ENCODE measurements at regions of chr17 and their contacts with region 1.

Region 1: DNA sequence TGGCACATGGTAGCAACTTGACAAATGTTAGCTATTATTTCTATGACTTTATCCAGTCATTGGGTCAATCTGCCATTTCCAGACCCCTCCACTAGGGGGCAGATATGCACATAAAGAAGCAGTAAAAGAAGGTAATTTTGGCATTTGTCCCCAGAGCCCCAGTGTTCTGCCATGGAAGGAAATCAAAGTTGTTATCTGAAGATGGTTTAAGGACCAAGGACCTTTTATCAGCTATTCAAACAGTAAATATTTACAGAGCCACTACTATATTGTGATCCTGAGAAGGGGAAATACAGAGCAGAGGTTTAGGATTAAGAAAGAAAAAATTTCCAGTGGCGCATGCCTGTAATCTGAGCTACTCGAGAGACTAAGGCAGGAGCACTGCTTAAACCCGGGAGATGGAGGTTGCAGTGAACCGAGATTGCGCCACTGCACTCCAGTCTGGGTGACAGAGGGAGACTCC is 20.0 kb downstream of the TRAF4 start:
- DNase-seq: peak; percentile 80 to 87
- H3K4me3 ChIP-seq: no peak overlapping the region
- H3K4me3 Mint-ChIP-seq: no peak overlapping the region
- H3K27ac Mint-ChIP-seq: peak overlapping the region; percentile 13
- H3K4me1 ChIP-seq: no peaks in the 10 kb centered on the region
- H3K4me1 Mint-ChIP-seq: no peaks in the 10 kb centered on the region
- H3K27me3 ChIP-seq: no peaks in the 10 kb centered on the region
- H3K27me3 Mint-ChIP-seq: no peaks in the 10 kb centered on the region
- CTCF ChIP-seq: peak; percentile 85 to 88

Region 2: GRCh38 chr17:28655160-28655840 is 108.5 kb before region 1 on chr17:
- CTCF ChIA-PET with region 1: no interaction called
- POLR2A ChIA-PET with region 1: no interaction called
- intact Hi-C with region 1: no loop called
- DNase-seq: peak in 1 of 2 experiments; percentile 24
- H3K4me3 ChIP-seq: no peak overlapping the region
- H3K4me3 Mint-ChIP-seq: no peak overlapping the region
- H3K27ac Mint-ChIP-seq: no peak overlapping the region
- H3K4me1 ChIP-seq: no peaks in the 10 kb centered on the region; the same call in 1 of the 2 replicates
- H3K4me1 Mint-ChIP-seq: no peaks in the 10 kb centered on the region
- H3K27me3 ChIP-seq: no peaks in the 10 kb centered on the region
- H3K27me3 Mint-ChIP-seq: no peaks in the 10 kb centered on the region
- CTCF ChIP-seq: no peak

Region 3: GRCh38 chr17:28698253-28698941 is 65.4 kb before region 1 on chr17:
- CTCF ChIA-PET with region 1: no interaction called
- POLR2A ChIA-PET with region 1: no interaction called
- intact Hi-C with region 1: no loop called
- DNase-seq: peak; percentile 94 to 95
- H3K4me3 ChIP-seq: no peak overlapping the region
- H3K4me3 Mint-ChIP-seq: peak overlapping the region; percentile 52
- H3K27ac Mint-ChIP-seq: peak overlapping the region; percentile 87
- H3K4me1 ChIP-seq: peaks cover 31% of the 10 kb centered on the region
- H3K4me1 Mint-ChIP-seq: peaks cover 26% of the 10 kb centered on the region
- H3K27me3 ChIP-seq: no peaks in the 10 kb centered on the region
- H3K27me3 Mint-ChIP-seq: no peaks in the 10 kb centered on the region
- CTCF ChIP-seq: peak in 1 of 2 experiments; percentile 14

Region 4: DNA sequence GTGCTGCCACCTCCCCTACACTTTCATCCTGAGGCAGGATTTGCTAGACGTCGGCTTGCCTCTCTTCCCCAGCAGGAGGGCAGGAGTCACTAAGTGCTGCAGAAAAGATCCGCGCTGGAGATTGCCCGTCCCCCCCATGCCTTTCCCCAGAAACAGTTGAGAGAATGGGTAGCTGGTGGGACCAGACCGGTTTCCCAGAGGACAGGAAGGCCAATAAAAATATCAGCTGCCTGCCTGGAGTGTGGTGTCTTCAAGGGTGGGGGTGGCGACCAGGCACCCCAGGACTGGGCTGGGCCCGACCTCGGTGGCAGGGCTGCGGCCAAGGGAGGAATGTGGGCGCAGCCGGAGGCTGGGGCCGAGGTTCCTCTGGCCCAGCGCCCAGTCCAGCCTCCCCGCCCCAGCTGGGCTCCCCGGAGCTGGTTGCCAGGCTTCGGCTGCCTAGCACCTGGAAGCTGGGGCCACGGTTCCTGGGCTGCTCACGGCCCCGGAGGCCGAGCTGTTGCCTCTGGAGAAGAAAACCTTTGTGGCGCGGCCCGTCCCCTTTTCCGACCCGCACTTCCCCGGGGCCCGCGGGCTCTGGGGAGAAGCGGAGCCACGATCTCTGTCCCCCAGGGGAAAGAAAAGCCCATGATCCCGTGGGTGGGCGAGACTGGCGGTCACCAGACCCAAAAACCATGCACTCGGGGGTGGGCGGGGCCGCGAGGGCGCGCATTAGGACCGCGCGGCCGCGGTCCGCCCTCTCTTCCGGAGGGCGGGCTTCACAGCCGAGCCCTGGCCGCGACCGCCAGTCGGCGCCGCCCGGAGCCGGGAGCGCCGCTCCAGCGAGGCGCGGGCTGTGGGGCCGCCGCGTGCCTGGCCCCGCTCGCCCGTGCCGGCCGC is 20.4 kb before region 1 on chr17 and contains the start of gene TRAF4:
- CTCF ChIA-PET with region 1: interaction called, 42 read pairs
- POLR2A ChIA-PET with region 1: no interaction called
- intact Hi-C with region 1: no loop called
- DNase-seq: peak; percentile 83 to 91
- H3K4me3 ChIP-seq: peak within 1 kb of the TSS; percentile 68
- H3K4me3 Mint-ChIP-seq: peak within 1 kb of the TSS; percentile 95
- H3K27ac Mint-ChIP-seq: peak within 1 kb of the TSS; percentile 96
- H3K4me1 ChIP-seq: peaks cover 40% of the 10 kb centered on the region
- H3K4me1 Mint-ChIP-seq: peaks cover 12% of the 10 kb centered on the region
- H3K27me3 ChIP-seq: no peaks in the 10 kb centered on the region
- H3K27me3 Mint-ChIP-seq: no peaks in the 10 kb centered on the region
- CTCF ChIP-seq: peak in 1 of 2 experiments; percentile 18
- total RNA-seq, gene TRAF4: 140 and 154 TPM in 2 replicates

Region 5: GRCh38 chr17:28812091-28812747 is 48.4 kb after region 1 on chr17:
- CTCF ChIA-PET with region 1: interaction called, 9 read pairs
- POLR2A ChIA-PET with region 1: interaction called, 3 read pairs
- intact Hi-C with region 1: loop called (anchors 1 kb)
- DNase-seq: peak; percentile 99
- H3K4me3 ChIP-seq: peak overlapping the region; percentile 96
- H3K4me3 Mint-ChIP-seq: peak overlapping the region; percentile 93
- H3K27ac Mint-ChIP-seq: peak overlapping the region; percentile 75
- H3K4me1 ChIP-seq: peaks cover 18% of the 10 kb centered on the region
- H3K4me1 Mint-ChIP-seq: no peaks in the 10 kb centered on the region
- H3K27me3 ChIP-seq: no peaks in the 10 kb centered on the region
- H3K27me3 Mint-ChIP-seq: no peaks in the 10 kb centered on the region
- CTCF ChIP-seq: no peak

Region 6: GRCh38 chr17:28871056-28871579 is 107.3 kb after region 1 on chr17:
- CTCF ChIA-PET with region 1: interaction called, 10 read pairs
- POLR2A ChIA-PET with region 1: no interaction called
- intact Hi-C with region 1: no loop called
- DNase-seq: no peak
- H3K4me3 ChIP-seq: no peak overlapping the region
- H3K4me3 Mint-ChIP-seq: no peak overlapping the region
- H3K27ac Mint-ChIP-seq: no peak overlapping the region
- H3K4me1 ChIP-seq: peaks cover 15% of the 10 kb centered on the region
- H3K4me1 Mint-ChIP-seq: peaks cover 6% of the 10 kb centered on the region
- H3K27me3 ChIP-seq: no peaks in the 10 kb centered on the region
- H3K27me3 Mint-ChIP-seq: no peaks in the 10 kb centered on the region
- CTCF ChIP-seq: no peak

Region 7: GRCh38 chr17:28896884-28897768 is 133.3 kb after region 1 on chr17 and contains the start of gene FLOT2:
- CTCF ChIA-PET with region 1: interaction called, 19 read pairs
- POLR2A ChIA-PET with region 1: interaction called, 3 read pairs
- intact Hi-C with region 1: loop called (anchors 1 kb)
- DNase-seq: peak; percentile 87
- H3K4me3 ChIP-seq: peak within 1 kb of the TSS; percentile 86
- H3K4me3 Mint-ChIP-seq: peak within 1 kb of the TSS; percentile 89
- H3K27ac Mint-ChIP-seq: peak within 1 kb of the TSS; percentile 80
- H3K4me1 ChIP-seq: peaks cover 23% of the 10 kb centered on the region
- H3K4me1 Mint-ChIP-seq: peaks cover 14% of the 10 kb centered on the region
- H3K27me3 ChIP-seq: no peaks in the 10 kb centered on the region
- H3K27me3 Mint-ChIP-seq: no peaks in the 10 kb centered on the region
- CTCF ChIP-seq: peak; percentile 40 to 49
- total RNA-seq, gene FLOT2: 182 and 189 TPM in 2 replicates

Region 8: GRCh38 chr17:28937044-28937729 is 173.4 kb after region 1 on chr17:
- CTCF ChIA-PET with region 1: no interaction called
- POLR2A ChIA-PET with region 1: no interaction called
- intact Hi-C with region 1: no loop called
- DNase-seq: peak in 1 of 2 experiments; percentile 17
- H3K4me3 ChIP-seq: no peak overlapping the region
- H3K4me3 Mint-ChIP-seq: no peak overlapping the region
- H3K27ac Mint-ChIP-seq: no peak overlapping the region
- H3K4me1 ChIP-seq: peaks cover 15% of the 10 kb centered on the region
- H3K4me1 Mint-ChIP-seq: peaks cover 21% of the 10 kb centered on the region
- H3K27me3 ChIP-seq: no peaks in the 10 kb centered on the region
- H3K27me3 Mint-ChIP-seq: no peaks in the 10 kb centered on the region
- CTCF ChIP-seq: no peak

Measured in Caco-2 (cell line).